Dorsolateral prefrontal cortex (tissue), 120 donors: ENCODE measurements at regions of chr15 and their contacts with region 1.

Region 1: GRCh38 chr15:99014803-99015676 is 7.4 kb upstream of the PGPEP1L start:
- DNase-seq: no peak
- H3K4me3 ChIP-seq: peak overlapping the region; percentile 48 to 81 (median 64)
- H3K27ac ChIP-seq: peak overlapping the region in 2 of 59 donors; percentile 7 to 57
- H3K27me3 ChIP-seq: peaks cover 0 to 19% (median 6%) of the 10 kb centered on the region in 45 donors
- CTCF ChIP-seq: no peak

Region 2: GRCh38 chr15:98954411-98954810 is 60.6 kb before region 1 on chr15:
- intact Hi-C with region 1: loop called in 1 of 2 experiments (anchors 5 kb)
- DNase-seq: peak; percentile 41 to 84 (median 72)
- H3K4me3 ChIP-seq: peak overlapping the region in 1 of 59 donors; percentile 12
- H3K27ac ChIP-seq: peak overlapping the region; percentile 44 to 95 (median 84)
- H3K27me3 ChIP-seq: no peaks in the 10 kb centered on the region
- CTCF ChIP-seq: peak in 1 of 56 donors; percentile 16

Region 3: GRCh38 chr15:99998641-99999101 is 983.6 kb after region 1 on chr15:
- intact Hi-C with region 1: no loop called
- DNase-seq: peak in 1 of 10 donors; percentile 20
- H3K4me3 ChIP-seq: no peak overlapping the region
- H3K27ac ChIP-seq: no peak overlapping the region
- H3K27me3 ChIP-seq: no peaks in the 10 kb centered on the region
- CTCF ChIP-seq: no peak